BJ (cell line): ENCODE measurements at regions of chr17 and their contacts with region 1.

Region 1: DNA sequence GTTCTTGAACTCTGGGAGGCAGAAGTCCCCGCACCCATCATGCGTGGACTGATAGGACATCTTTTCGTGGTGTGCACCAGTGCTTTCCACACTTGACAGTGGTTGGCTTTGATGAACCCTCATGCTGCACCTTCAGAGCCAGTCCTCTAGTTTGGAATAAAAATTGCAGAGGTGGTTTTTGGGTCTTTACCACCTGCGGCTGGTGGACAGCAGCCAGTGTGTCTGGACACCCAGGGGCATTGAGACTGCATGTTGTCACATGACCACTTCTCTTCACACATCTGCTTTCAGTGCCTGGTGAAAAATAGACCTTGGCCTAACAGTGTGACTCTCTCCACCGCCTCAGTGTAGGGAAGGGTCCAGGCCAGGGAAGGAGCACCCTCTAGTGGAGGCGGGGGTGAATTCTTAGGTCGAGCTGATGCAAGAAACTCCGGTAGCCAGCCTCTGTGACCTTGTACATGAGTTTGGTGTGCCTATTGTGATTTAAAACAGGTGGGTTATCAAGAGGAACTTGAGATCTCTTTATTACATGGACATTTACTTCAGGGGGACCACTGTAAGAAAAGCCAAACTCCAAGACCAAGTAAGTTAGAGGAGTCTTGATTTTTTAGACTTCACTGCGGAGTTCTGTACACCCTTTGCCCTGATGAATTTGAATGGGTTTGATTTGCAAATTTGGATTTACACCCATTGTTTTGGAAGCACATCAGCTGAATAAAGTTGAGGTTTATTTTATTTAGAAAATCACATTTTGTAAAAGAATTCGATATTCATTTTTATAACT is 17.9 kb downstream of the GOSR2 start:
- DNase-seq: no peak
- H3K4me3 ChIP-seq: no peak overlapping the region
- H3K27me3 ChIP-seq: no peaks in the 10 kb centered on the region
- CTCF ChIP-seq: peak; percentile 94

Region 2: DNA sequence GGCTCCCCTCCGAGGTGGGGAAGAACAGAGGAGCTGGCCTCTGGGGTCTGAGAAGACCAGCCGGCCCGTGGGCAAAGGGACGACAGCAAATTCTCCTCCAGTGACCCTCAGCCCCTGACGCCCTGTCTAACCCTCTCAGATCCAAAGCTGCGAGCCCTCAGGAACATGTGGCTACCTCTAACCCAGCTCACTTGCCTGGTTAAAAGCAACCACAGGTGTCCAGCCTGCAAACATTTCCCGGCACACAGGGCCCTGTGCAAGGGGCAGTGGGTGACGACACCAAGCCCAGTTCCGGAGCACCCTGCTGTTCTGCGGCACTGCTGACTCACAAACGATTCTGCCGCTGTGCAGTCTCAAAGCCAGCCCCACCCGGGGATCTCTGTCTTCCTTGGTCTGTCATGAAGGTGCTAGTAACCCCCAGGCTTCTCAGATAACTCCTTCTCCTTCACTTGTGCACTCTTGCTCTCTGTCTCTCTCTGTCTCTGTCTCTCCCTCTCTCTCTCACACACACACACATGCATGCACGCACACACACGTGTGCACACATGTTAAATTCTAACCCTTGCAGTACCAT is 145.3 kb before region 1 on chr17:
- CTCF ChIA-PET with region 1: no interaction called
- POLR2A ChIA-PET with region 1: no interaction called
- DNase-seq: no peak
- H3K4me3 ChIP-seq: no peak overlapping the region
- H3K27me3 ChIP-seq: peaks cover 22% of the 10 kb centered on the region
- CTCF ChIP-seq: no peak

Region 3: GRCh38 chr17:46841561-46842379 is 99.0 kb before region 1 on chr17:
- CTCF ChIA-PET with region 1: interaction called, 146 read pairs
- POLR2A ChIA-PET with region 1: no interaction called
- DNase-seq: no peak
- H3K4me3 ChIP-seq: peak overlapping the region; percentile 22; the same call in 1 of the 2 replicates
- H3K27me3 ChIP-seq: peaks cover 8% of the 10 kb centered on the region
- CTCF ChIP-seq: peak; percentile 48

Region 4: GRCh38 chr17:46950997-46951621 is 10.3 kb after region 1 on chr17:
- CTCF ChIA-PET with region 1: interaction called, 20 read pairs
- POLR2A ChIA-PET with region 1: interaction called, 5 read pairs
- DNase-seq: no peak
- H3K4me3 ChIP-seq: no peak overlapping the region
- H3K27me3 ChIP-seq: peaks cover 3% of the 10 kb centered on the region
- CTCF ChIP-seq: no peak

Region 5: GRCh38 chr17:46995841-46996571 is 55.2 kb after region 1 on chr17:
- CTCF ChIA-PET with region 1: interaction called, 66 read pairs
- POLR2A ChIA-PET with region 1: no interaction called
- DNase-seq: no peak
- H3K4me3 ChIP-seq: no peak overlapping the region
- H3K27me3 ChIP-seq: 0 out of 2 replicates have a peak, but pooled peaks cover 2% of the 10 kb centered on the region
- CTCF ChIP-seq: no peak

Region 6: DNA sequence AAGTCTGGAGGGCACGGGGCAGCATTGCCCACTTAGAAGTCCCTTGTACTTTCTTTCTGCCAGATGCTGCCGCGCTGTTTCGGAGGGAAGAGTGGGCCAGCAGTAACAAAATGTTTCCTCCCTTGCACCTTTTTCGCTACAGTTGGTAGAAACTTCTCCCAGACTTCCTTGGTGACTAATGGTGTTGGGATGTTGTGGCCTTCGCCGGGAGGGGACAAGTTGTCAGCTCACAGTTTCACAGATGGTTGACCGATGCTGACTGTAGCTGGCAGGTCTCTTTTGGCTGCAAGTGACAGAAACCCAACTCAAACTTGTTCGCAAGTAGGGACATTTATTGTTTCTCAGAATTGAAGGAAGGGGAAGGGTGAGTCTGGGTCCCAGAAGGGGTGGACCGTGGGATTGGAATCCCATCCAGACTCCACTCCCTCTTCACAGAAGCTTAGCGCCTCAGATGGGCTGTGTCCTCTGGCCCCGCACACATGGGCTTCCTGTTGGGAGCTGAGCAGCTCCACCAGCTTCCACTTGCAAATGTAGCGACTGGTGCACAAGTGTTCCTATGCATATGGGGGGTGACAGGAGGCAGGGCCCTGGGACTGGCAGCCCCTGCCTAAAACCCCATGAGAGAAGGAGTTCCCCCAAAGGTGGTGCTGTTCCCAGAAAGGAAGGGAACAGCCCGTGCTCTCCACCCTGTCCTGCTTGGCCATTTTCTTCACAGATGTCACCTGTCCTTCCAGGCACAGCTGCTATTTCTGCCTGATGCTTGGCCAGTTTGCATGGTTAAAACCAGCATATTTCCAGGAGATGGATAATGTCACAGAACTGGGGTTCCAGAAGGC is 69.2 kb after region 1 on chr17:
- CTCF ChIA-PET with region 1: interaction called, 22 read pairs
- POLR2A ChIA-PET with region 1: no interaction called
- DNase-seq: no peak
- H3K4me3 ChIP-seq: no peak overlapping the region
- H3K27me3 ChIP-seq: no peaks in the 10 kb centered on the region
- CTCF ChIP-seq: no peak

Region 7: GRCh38 chr17:47165137-47165536 is 224.3 kb after region 1 on chr17:
- CTCF ChIA-PET with region 1: no interaction called
- POLR2A ChIA-PET with region 1: no interaction called
- DNase-seq: no peak
- H3K4me3 ChIP-seq: no peak overlapping the region
- H3K27me3 ChIP-seq: no peaks in the 10 kb centered on the region
- CTCF ChIP-seq: no peak